Activated CD8-positive, alpha-beta T cell treated with anti-CD3 and anti-CD28 coated beads for 36 hours (primary cell): ENCODE measurements at regions of chr1 and their contacts with region 1.

Region 1: DNA sequence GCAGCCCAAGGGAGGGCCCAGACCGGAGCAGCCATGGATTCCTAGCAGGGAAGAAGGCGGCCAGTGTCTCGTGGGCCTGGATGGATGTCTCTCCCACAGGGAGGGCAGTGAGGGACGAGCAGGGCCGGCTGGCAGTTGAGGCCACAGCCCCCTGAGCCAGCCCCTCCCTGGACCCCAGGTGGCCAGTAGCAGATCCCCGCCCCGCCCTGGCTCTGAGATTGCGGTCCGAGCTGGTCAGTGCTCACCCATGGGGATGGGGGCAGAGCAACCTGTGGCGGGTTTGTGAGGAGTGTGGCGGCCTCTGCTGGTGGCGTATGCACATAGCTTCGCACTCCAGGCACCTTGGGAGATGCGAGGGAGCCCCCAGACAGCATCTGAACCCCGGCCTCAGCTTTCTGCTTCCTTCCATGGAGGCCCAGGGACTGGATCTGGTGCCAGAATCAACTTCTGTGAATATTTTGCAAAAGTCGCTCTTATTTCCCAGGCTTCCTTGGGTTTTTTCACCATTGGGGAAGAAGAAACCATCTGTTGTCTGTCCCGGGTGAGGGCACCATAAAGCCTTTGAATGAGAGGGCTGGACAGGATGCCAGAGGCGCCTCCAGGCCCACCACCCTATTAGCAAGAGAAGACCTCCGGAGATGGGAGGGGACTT is 8.4 kb upstream of the KCNN3 start:
- DNase-seq: peak; percentile 84
- ATAC-seq: peak; percentile 99
- H3K4me3 Mint-ChIP-seq: no peak overlapping the region
- H3K27ac Mint-ChIP-seq: no peak overlapping the region
- H3K4me1 Mint-ChIP-seq: peaks cover 4% of the 10 kb centered on the region
- H3K27me3 Mint-ChIP-seq: peaks cover 1% of the 10 kb centered on the region
- CTCF ChIP-seq: peak; percentile 84

Region 2: GRCh38 chr1:154772606-154773506 is 105.6 kb before region 1 on chr1:
- CTCF ChIA-PET with region 1: interaction called, 3 read pairs
- POLR2A ChIA-PET with region 1: no interaction called
- intact Hi-C with region 1: loop called (anchors 5 kb)
- DNase-seq: peak; percentile 72
- ATAC-seq: peak; percentile 83
- H3K4me3 Mint-ChIP-seq: no peak overlapping the region
- H3K27ac Mint-ChIP-seq: no peak overlapping the region
- H3K4me1 Mint-ChIP-seq: peaks cover 22% of the 10 kb centered on the region
- H3K27me3 Mint-ChIP-seq: no peaks in the 10 kb centered on the region
- CTCF ChIP-seq: no peak

Region 3: GRCh38 chr1:154860156-154860870 is 18.2 kb before region 1 on chr1:
- CTCF ChIA-PET with region 1: interaction called, 10 read pairs
- POLR2A ChIA-PET with region 1: interaction called, 4 read pairs
- intact Hi-C with region 1: no loop called
- DNase-seq: no peak
- ATAC-seq: no peak
- H3K4me3 Mint-ChIP-seq: no peak overlapping the region
- H3K27ac Mint-ChIP-seq: peak overlapping the region; percentile 85
- H3K4me1 Mint-ChIP-seq: peaks cover 39% of the 10 kb centered on the region
- H3K27me3 Mint-ChIP-seq: peaks cover 8% of the 10 kb centered on the region
- CTCF ChIP-seq: no peak

Region 4: GRCh38 chr1:154891452-154891851 is 13.0 kb after region 1 on chr1:
- CTCF ChIA-PET with region 1: interaction called, 18 read pairs
- POLR2A ChIA-PET with region 1: interaction called, 5 read pairs
- intact Hi-C with region 1: no loop called
- DNase-seq: no peak
- ATAC-seq: no peak
- H3K4me3 Mint-ChIP-seq: no peak overlapping the region
- H3K27ac Mint-ChIP-seq: no peak overlapping the region
- H3K4me1 Mint-ChIP-seq: peaks cover 1% of the 10 kb centered on the region
- H3K27me3 Mint-ChIP-seq: no peaks in the 10 kb centered on the region
- CTCF ChIP-seq: no peak

Region 5: DNA sequence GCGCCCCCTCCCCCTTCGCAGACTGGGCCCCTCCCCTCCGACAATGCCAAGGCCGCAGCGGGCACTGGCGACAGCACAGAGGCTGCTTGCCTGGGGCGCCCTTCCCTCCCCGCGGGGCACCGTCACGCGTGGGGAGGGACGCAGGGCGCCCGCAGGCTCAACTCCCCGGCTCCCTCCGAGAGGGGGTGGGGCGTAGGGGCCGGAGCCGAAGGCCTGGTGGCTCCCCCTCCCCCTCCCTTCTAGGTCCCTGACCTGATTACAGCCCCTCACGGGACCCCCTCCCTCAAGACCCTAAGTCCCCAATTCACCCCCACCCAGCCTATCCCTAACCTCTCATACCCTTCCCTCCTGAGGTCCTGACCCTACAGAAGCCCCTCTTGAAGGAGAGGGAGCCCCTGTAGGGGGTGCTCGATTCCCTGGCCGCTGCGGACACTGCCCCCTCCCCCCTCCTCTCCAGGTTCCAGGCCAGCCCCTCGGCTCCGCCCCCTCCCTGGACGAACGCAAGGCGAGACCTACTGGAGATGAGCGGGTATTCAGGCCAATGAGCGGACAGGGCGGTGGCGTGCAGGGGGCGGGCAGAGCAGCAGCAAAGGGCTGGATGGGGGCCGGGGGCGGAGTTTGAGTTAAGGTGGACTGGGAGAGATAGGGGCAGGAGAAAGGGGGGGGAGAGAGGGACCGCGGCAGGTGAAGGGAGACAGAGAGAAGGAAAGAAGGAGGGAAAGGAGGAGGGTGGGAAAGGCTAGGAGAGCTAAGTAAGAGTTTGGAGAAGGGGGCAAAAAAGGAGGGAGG is 123.4 kb after region 1 on chr1:
- CTCF ChIA-PET with region 1: no interaction called
- POLR2A ChIA-PET with region 1: no interaction called
- intact Hi-C with region 1: no loop called
- DNase-seq: peak; percentile 100
- ATAC-seq: peak; percentile 71
- H3K4me3 Mint-ChIP-seq: peak overlapping the region; percentile 70
- H3K27ac Mint-ChIP-seq: peak overlapping the region; percentile 92
- H3K4me1 Mint-ChIP-seq: peaks cover 56% of the 10 kb centered on the region
- H3K27me3 Mint-ChIP-seq: no peaks in the 10 kb centered on the region
- CTCF ChIP-seq: no peak